Activated naive CD8-positive, alpha-beta T cell treated with anti-CD3 and anti-CD28 coated beads, Interleukin-2, amount 10 ng/mL, durations not matched to agents 7 days and 5 days (primary cell): ENCODE measurements at regions of chr3 and their contacts with region 1.

Region 1: DNA sequence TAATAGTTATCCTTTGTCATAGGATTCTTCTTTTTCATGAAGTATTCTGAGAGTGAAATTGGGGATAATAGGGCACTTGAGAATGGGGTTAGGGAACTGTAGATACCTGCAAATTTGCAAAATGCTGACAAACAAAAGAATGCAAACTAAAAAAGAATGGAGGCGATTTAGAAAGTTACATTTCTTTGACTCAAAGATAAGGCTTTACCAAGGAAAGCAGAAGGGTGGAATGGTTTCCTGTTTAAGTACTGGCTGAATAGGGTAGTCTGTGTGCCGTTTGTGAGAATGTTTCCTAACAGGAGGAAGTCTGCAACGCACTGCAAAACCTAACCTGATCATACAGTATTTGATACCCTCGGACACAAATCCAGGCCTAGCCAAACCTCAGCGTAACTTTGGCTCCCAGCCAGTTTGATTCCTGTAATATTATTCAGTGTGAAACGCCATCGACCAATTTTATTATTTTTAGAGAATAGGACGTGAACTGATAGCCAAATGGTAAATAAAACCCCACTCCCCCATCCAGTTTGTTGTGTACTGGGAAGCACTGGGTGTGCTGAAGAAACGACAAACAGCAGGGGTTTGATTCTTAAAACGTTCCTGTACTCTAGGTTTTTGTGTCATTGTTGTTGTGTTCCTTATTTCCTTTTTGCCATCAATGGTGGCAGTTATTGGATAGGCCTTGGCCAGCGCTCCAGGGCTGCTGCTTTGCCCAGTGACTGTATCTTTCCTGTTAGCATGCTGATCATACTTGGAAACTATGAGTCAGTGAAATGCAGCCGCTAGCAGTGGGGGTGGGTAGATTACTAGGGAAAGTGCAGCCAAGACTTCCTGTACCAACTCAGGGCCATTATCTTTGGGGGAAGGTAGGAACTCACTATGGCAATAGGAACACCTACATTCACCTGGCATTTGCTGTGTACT is 148.0 kb upstream of the TBL1XR1 start:
- DNase-seq: peak; percentile 48
- ATAC-seq: peak; percentile 95
- H3K4me3 Mint-ChIP-seq: peak overlapping the region; percentile 47
- H3K27ac Mint-ChIP-seq: peak overlapping the region; percentile 83
- H3K4me1 Mint-ChIP-seq: peaks cover 24% of the 10 kb centered on the region
- H3K27me3 Mint-ChIP-seq: no peaks in the 10 kb centered on the region

Region 2: GRCh38 chr3:177197041-177197727 is 148.1 kb before region 1 on chr3 and contains the start of gene TBL1XR1:
- POLR2A ChIA-PET with region 1: interaction called, 11 read pairs
- DNase-seq: peak; percentile 89
- ATAC-seq: peak; percentile 63
- H3K4me3 Mint-ChIP-seq: peak within 1 kb of the TSS; percentile 100
- H3K27ac Mint-ChIP-seq: peak within 1 kb of the TSS; percentile 100
- H3K4me1 Mint-ChIP-seq: peaks cover 54% of the 10 kb centered on the region
- H3K27me3 Mint-ChIP-seq: no peaks in the 10 kb centered on the region
- total RNA-seq, gene TBL1XR1: 176 TPM

Region 3: GRCh38 chr3:177359593-177360357 is 14.5 kb after region 1 on chr3:
- POLR2A ChIA-PET with region 1: interaction called, 15 read pairs
- DNase-seq: peak; percentile 98
- ATAC-seq: peak; percentile 83
- H3K4me3 Mint-ChIP-seq: peak overlapping the region; percentile 90
- H3K27ac Mint-ChIP-seq: peak overlapping the region; percentile 98
- H3K4me1 Mint-ChIP-seq: peaks cover 36% of the 10 kb centered on the region
- H3K27me3 Mint-ChIP-seq: no peaks in the 10 kb centered on the region